ENCODE measurements at regions of chr5 and their contacts with region 1.

Region 1: GRCh38 chr5:149442563-149443182 is 63.6 kb upstream of the IL17B start:
- DNase-seq: peak; percentile 74 to 78
- ATAC-seq: peak; percentile 77 to 85
- H3K4me3 ChIP-seq: no peak overlapping the region
- H3K27ac ChIP-seq: peak overlapping the region; percentile 56 to 83
- H3K4me1 ChIP-seq: peaks cover 39% of the 10 kb centered on the region
- CTCF ChIP-seq: peak; percentile 91
- EP300 ChIP-seq: no peak
- POLR2A ChIP-seq: no peak
- RAD21 ChIP-seq: peak; percentile 82 to 85

Region 2: DNA sequence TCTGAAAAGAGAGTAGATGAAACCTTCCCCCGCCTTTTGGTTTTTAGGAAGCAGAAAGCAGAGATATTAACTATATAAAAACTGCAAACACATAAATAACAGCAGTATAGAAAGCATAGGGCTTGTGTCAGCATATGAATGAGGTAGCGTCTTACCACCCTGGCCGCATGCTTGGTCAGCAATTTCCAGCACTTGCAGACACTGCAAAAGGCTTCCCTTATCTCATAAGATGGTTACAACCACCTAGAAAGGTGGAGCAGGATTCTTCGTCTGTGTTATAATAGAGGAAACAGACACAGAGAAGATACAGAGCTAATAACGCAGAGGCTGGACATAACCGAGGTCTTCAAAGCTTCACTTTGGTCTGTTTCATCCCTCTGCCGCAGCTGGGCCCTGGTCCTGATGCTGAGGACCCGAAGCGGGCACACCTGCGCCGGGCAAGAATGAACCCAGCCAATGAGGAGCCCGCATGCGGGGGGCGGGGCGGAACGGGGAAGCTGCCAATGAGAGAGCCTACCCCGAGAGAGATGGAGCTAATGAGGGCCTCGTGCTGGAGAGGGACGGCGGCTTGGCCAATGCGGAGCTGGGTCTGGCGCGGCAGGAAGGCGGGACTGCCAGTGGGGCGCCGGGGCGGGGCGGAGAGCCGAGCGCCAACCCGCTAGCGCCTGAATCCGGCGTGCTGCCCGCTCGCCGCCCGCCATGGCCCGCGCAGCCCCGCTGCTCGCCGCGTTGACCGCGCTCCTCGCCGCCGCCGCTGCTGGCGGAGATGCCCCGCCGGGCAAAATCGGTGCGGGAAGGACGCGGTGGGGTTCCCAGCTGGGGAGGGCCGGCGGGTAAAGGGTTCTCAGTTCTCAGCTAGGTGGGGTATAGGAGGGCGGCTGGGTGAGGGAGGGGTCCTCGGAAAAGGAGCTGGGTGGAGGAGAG is 85.0 kb before region 1 on chr5 and contains the start of gene PCYOX1L:
- CTCF ChIA-PET with region 1: interaction called, 1,709 read pairs
- POLR2A ChIA-PET with region 1: no interaction called
- DNase-seq: peak; percentile 94 to 98
- ATAC-seq: peak; percentile 98 to 100
- H3K4me3 ChIP-seq: peak within 1 kb of the TSS; percentile 97
- H3K27ac ChIP-seq: peak within 1 kb of the TSS; percentile 83 to 90
- H3K4me1 ChIP-seq: peaks cover 10% of the 10 kb centered on the region; the same call in 2 of the 3 replicates
- CTCF ChIP-seq: no peak
- EP300 ChIP-seq: no peak
- POLR2A ChIP-seq: peak; percentile 78
- RAD21 ChIP-seq: no peak
- polyA plus RNA-seq, gene PCYOX1L: 6.7 and 7.0 TPM in 2 replicates

Region 3: DNA sequence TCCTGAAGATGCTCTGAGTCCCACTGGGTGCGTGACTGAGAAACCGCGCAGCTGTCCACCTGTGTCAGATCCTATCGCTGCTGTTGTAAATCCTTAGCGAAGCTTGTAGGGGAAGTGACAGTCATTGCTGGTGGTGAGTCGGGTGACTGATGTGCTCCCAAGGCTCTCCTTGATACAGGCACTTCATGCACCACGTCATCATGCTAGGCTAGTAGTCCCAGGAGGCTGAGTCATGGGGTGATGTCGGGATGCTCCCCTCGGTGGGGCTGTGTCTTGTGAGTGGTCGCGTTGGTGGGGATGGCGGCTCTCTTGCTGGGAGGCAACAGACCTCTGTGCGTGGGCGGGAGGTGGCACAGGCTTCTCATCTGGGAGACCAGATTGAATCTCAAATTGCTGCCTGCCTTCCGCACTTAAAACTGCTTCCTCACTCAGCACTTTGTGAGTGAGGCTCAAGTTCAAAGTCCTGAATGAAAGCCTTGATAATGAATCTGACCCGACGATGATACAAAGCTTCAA is 23.8 kb after region 1 on chr5:
- CTCF ChIA-PET with region 1: interaction called, 179 read pairs
- POLR2A ChIA-PET with region 1: interaction called, 3 read pairs
- DNase-seq: peak; percentile 58 to 65
- ATAC-seq: peak; percentile 69 to 70
- H3K4me3 ChIP-seq: no peak overlapping the region
- H3K27ac ChIP-seq: peak overlapping the region; percentile 0 to 59; a peak in 4 of 6 replicates
- H3K4me1 ChIP-seq: peaks cover 26% of the 10 kb centered on the region
- CTCF ChIP-seq: no peak
- EP300 ChIP-seq: no peak
- POLR2A ChIP-seq: no peak
- RAD21 ChIP-seq: no peak

Region 4: GRCh38 chr5:149497357-149497756 is 54.7 kb after region 1 on chr5:
- CTCF ChIA-PET with region 1: interaction called, 24 read pairs
- POLR2A ChIA-PET with region 1: no interaction called
- DNase-seq: peak in 1 of 2 experiments; percentile 26
- ATAC-seq: peak; percentile 34 to 77; a peak in 3 of 6 replicates
- H3K4me3 ChIP-seq: no peak overlapping the region
- H3K27ac ChIP-seq: 0 out of 6 replicates have a peak overlapping the region, but pooled peaks of 1 of the 2 experiments have one; percentile 0
- H3K4me1 ChIP-seq: peaks cover 21% of the 10 kb centered on the region; the same call in 1 of the 3 replicates
- CTCF ChIP-seq: no peak
- EP300 ChIP-seq: no peak
- POLR2A ChIP-seq: no peak
- RAD21 ChIP-seq: no peak

Region 5: GRCh38 chr5:149517461-149518122 is 74.9 kb after region 1 on chr5:
- CTCF ChIA-PET with region 1: interaction called, 16 read pairs
- POLR2A ChIA-PET with region 1: no interaction called
- DNase-seq: peak in 1 of 2 experiments; percentile 13
- ATAC-seq: peak; percentile 19 to 73; a peak in 3 of 6 replicates
- H3K4me3 ChIP-seq: no peak overlapping the region
- H3K27ac ChIP-seq: 0 out of 6 replicates have a peak overlapping the region, but pooled peaks of 1 of the 2 experiments have one; percentile 8
- H3K4me1 ChIP-seq: peaks cover 60% of the 10 kb centered on the region
- CTCF ChIP-seq: no peak
- EP300 ChIP-seq: no peak
- POLR2A ChIP-seq: no peak
- RAD21 ChIP-seq: no peak

Region 6: GRCh38 chr5:149551200-149552037 is 108.7 kb after region 1 on chr5 and contains the start of gene CSNK1A1:
- CTCF ChIA-PET with region 1: interaction called, 209 read pairs
- POLR2A ChIA-PET with region 1: interaction called, 28 read pairs
- DNase-seq: peak; percentile 98 to 99
- ATAC-seq: peak; percentile 96
- H3K4me3 ChIP-seq: peak within 1 kb of the TSS; percentile 85
- H3K27ac ChIP-seq: peak within 1 kb of the TSS; percentile 97
- H3K4me1 ChIP-seq: peaks cover 30% of the 10 kb centered on the region
- CTCF ChIP-seq: peak; percentile 78
- EP300 ChIP-seq: no peak
- POLR2A ChIP-seq: peak; percentile 58
- RAD21 ChIP-seq: peak; percentile 71 to 73
- polyA plus RNA-seq, gene CSNK1A1: 180 and 218 TPM in 2 replicates

Region 7: DNA sequence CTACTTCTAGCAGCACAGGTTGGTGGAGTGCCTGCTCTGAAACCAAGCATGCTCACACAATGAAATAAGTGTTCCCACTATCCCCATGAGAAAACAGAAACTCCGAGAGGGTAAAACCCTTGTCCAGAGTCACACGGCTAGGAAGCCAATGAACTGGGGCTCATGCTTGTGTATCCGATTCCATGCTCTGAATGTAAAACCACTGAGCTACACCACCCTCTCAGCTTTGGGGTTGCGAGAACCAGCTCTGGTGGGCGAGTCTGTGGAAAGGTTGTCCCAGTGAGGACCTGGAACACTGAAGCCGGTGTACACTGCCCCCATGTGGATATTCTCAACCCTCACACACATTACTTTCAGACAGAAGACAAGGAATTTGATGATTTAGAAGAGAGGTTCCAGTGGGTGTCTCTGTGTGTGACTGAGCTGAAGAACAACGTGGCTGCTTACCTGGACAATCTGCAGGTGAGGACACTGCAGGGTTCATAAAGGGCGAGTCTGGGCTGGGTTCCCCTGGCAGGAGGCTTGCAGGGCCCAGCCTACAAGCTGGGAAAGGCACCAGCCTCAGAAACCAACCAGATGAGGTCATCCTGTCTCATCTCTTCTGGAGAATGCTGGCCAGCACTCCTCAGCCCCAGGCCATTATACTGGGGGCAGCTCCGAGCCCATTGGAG is 176.0 kb after region 1 on chr5:
- CTCF ChIA-PET with region 1: interaction called, 28 read pairs
- POLR2A ChIA-PET with region 1: no interaction called
- DNase-seq: peak; percentile 73 to 75
- ATAC-seq: peak; percentile 86 to 96
- H3K4me3 ChIP-seq: no peak overlapping the region
- H3K27ac ChIP-seq: peak overlapping the region; percentile 14 to 33; a peak in 1 of 6 replicates
- H3K4me1 ChIP-seq: peaks cover 9% of the 10 kb centered on the region; the same call in 1 of the 3 replicates
- CTCF ChIP-seq: peak; percentile 90
- EP300 ChIP-seq: no peak
- POLR2A ChIP-seq: no peak
- RAD21 ChIP-seq: peak; percentile 83 to 89

Region 8: GRCh38 chr5:149702934-149703646 is 260.4 kb after region 1 on chr5:
- CTCF ChIA-PET with region 1: no interaction called
- POLR2A ChIA-PET with region 1: no interaction called
- DNase-seq: no peak
- ATAC-seq: peak; percentile 34 to 36; a peak in 2 of 6 replicates
- H3K4me3 ChIP-seq: no peak overlapping the region
- H3K27ac ChIP-seq: no peak overlapping the region
- H3K4me1 ChIP-seq: no peaks in the 10 kb centered on the region
- CTCF ChIP-seq: no peak
- EP300 ChIP-seq: no peak
- POLR2A ChIP-seq: no peak
- RAD21 ChIP-seq: no peak